Activated T-helper 1 cell treated with anti-CD3 and anti-CD28 coated beads, Interleukin-12 subunit alpha, Interleukin-12 subunit beta, Interleukin-2, Interleukin-4 antibody, amounts not matched to agents 30 ng/mL and 10 ng/mL and 1 ng/mL, durations not matched to agents 14 hours and 24 hours and 36 hours (primary cell): ENCODE measurements at regions of chr6 and their contacts with region 1.

Region 1: DNA sequence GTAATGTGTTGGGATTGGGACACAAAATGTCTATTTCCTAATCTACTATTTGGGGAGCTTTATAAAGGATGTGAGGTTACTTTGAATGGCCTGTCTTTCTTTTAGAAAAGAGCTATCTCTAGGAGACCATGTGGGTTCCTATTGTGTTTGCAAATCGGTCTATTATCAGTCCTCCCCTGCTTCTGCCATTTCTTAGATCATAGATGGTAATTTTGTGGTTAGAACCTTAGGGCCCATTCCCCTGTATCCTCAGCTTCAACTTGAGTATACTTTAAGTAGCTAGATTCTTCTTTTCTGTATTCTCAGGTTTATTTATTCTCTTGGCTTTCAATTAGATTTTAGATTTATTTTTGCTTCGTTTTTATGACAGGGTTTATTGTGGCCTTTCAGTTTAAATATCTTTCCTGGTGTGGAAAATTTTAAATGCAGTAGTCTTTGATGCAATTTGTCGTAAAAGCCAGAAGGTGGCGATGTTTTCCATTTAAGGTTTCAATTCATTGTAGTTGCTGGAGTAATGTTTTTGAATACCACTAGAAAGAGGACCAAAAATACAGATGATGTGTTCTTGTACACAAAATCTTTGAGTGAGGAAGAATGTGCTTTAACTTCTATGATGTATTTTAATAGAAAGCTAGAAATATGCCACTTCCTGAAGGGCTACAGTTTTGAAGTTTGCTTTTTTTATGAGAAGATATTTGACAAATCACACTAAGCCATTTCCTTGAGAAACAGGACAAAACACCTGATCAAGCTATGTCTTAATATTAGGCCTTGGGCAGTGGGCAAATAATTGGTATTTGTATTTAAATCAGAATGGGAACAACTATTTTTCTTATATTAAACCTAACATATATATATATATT is 20.3 kb downstream of the TBPL1 start:
- DNase-seq: no peak
- H3K4me3 Mint-ChIP-seq: no peak overlapping the region
- H3K27ac Mint-ChIP-seq: no peak overlapping the region
- H3K4me1 Mint-ChIP-seq: peaks cover 17% of the 10 kb centered on the region
- H3K27me3 Mint-ChIP-seq: no peaks in the 10 kb centered on the region

Region 2: GRCh38 chr6:133741375-133741861 is 231.9 kb before region 1 on chr6:
- intact Hi-C with region 1: no loop called
- DNase-seq: no peak
- H3K4me3 Mint-ChIP-seq: no peak overlapping the region
- H3K27ac Mint-ChIP-seq: no peak overlapping the region
- H3K4me1 Mint-ChIP-seq: no peaks in the 10 kb centered on the region
- H3K27me3 Mint-ChIP-seq: no peaks in the 10 kb centered on the region

Region 3: GRCh38 chr6:133952815-133953633 is 20.3 kb before region 1 on chr6 and contains the start of gene TBPL1:
- intact Hi-C with region 1: loop called (anchors 1 kb)
- DNase-seq: peak; percentile 76
- H3K4me3 Mint-ChIP-seq: peak within 1 kb of the TSS; percentile 95
- H3K27ac Mint-ChIP-seq: peak within 1 kb of the TSS; percentile 90
- H3K4me1 Mint-ChIP-seq: peaks cover 48% of the 10 kb centered on the region
- H3K27me3 Mint-ChIP-seq: peaks cover 10% of the 10 kb centered on the region
- total RNA-seq, gene TBPL1: 40.5 and 42.2 TPM in 2 replicates

Region 4: GRCh38 chr6:134047673-134048072 is 74.3 kb after region 1 on chr6:
- intact Hi-C with region 1: loop called (anchors 1 kb)
- DNase-seq: no peak
- H3K4me3 Mint-ChIP-seq: no peak overlapping the region
- H3K27ac Mint-ChIP-seq: no peak overlapping the region
- H3K4me1 Mint-ChIP-seq: peaks cover 9% of the 10 kb centered on the region
- H3K27me3 Mint-ChIP-seq: peaks cover 11% of the 10 kb centered on the region

Region 5: GRCh38 chr6:134063966-134064445 is 90.7 kb after region 1 on chr6:
- intact Hi-C with region 1: loop called (anchors 1 kb)
- DNase-seq: peak; percentile 41
- H3K4me3 Mint-ChIP-seq: no peak overlapping the region
- H3K27ac Mint-ChIP-seq: no peak overlapping the region
- H3K4me1 Mint-ChIP-seq: no peaks in the 10 kb centered on the region
- H3K27me3 Mint-ChIP-seq: peaks cover 8% of the 10 kb centered on the region

Region 6: GRCh38 chr6:134097114-134097707 is 123.9 kb after region 1 on chr6:
- intact Hi-C with region 1: loop called (anchors 1 kb)
- DNase-seq: peak; percentile 38
- H3K4me3 Mint-ChIP-seq: no peak overlapping the region
- H3K27ac Mint-ChIP-seq: no peak overlapping the region
- H3K4me1 Mint-ChIP-seq: peaks cover 6% of the 10 kb centered on the region
- H3K27me3 Mint-ChIP-seq: peaks cover 22% of the 10 kb centered on the region

Region 7: DNA sequence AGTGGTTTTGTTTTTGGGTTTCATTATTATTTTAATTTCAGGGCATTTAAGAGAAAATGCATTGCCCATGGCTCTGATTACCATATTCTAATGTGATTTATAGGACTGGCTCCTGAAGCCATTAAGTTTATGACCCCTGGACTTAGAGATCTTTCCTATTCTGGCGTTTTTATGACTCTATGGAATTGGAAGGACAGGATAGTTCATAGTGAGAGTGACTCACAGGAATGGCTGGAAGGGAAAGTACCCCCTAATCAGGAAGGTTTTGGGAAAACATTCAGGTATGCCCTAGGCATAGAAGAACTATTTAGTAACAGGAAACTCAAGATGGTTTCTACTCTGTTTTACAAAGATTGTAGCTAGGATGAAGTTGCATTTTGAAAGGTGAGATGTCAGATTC is 187.7 kb after region 1 on chr6:
- intact Hi-C with region 1: no loop called
- DNase-seq: no peak
- H3K4me3 Mint-ChIP-seq: no peak overlapping the region
- H3K27ac Mint-ChIP-seq: no peak overlapping the region
- H3K4me1 Mint-ChIP-seq: peaks cover 5% of the 10 kb centered on the region
- H3K27me3 Mint-ChIP-seq: no peaks in the 10 kb centered on the region